Adrenal gland (tissue), 19 donors: ENCODE measurements at regions of chr22 and their contacts with region 1.

Region 1: DNA sequence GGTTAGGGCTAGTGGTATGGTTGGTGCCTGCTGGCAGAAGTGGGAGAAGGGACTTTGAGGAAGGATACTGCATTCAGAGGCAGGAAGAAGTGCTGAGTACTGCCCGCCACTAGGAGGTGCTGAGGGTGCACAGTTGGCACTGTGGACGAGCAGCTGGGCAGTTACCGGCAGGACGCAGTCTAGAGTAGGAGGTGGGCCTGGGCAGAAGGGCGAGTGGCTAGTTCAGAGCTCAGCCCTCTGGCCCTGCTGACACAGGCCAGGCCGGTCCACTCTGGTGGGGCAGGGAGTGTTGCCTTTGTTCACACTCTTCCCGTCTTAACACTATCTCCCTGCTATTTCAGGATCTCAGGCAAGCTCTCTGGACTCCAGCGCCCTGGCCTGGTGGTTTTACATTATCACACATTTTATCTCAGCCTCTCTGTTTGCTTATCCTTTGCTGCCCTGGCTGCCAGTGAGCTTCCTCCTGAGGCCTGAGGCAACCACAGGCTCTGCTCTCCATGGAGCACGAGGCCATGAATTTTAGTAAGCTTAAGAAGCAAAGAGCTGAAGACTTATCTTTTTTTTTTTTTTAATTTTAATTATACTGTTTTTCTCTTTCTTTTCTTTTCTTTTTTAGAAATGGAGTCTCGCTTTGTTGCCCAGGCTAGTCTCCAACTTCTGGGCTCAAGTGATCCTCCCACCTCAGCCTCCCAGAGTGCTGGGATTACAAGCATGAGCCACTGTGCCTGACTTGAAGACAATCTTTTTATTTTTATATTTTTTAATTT is 26.9 kb downstream of the SNAP29 start:
- DNase-seq: peak; percentile 85 to 95 (median 91)
- H3K4me3 ChIP-seq: no peak overlapping the region
- H3K27ac ChIP-seq: peak overlapping the region in 4 of 5 donors; percentile 55 to 74 (median 66)
- H3K4me1 ChIP-seq: peaks cover 0 to 7% of the 10 kb centered on the region in 2 donors
- H3K27me3 ChIP-seq: no peaks in the 10 kb centered on the region
- CTCF ChIP-seq: peak; percentile 74 to 98 (median 92)
- POLR2A ChIP-seq: peak; percentile 6 to 37

Region 2: DNA sequence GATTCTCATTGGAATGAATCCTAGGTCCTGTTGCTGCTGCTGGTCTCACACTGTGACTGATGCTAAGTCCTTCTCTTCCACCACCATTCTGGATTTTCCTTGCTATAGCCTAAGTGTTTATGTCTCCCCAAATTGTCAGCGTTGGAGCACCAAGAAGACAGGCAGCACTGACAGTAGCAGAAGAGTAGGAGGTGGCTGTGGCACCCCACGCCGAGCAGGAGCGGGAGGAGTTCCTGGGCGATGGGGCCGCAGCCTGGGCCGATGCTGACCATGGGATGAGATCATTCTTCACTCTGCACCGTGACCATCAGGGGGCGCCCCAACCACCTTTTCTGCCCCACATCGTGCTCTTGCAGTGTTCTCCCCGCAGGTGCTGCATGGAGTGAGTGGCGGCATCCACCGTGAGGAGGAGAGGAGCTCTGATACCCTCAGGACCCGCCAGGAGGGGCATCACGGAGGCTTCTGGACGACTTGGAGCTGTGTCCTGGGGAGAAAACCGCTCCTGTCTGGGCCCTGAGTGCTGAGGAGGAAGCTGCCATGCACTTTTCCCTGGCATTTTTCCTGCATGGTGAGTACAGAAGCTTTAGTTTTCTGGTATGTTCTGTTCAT is 217.0 kb after region 1 on chr22:
- intact Hi-C with region 1: loop called in 1 of 2 experiments (anchors 10 kb)
- DNase-seq: peak; percentile 69 to 82 (median 74)
- H3K4me3 ChIP-seq: no peak overlapping the region
- H3K27ac ChIP-seq: no peak overlapping the region
- H3K4me1 ChIP-seq: no peaks in the 10 kb centered on the region
- H3K27me3 ChIP-seq: no peaks in the 10 kb centered on the region
- CTCF ChIP-seq: peak; percentile 55 to 77 (median 66)
- POLR2A ChIP-seq: no peak